Activated CD4-positive, alpha-beta T cell treated with anti-CD3 and anti-CD28 coated beads, Interleukin-2, amount 10 ng/mL, durations not matched to agents 24 days and 14 days (primary cell): ENCODE measurements at regions of chrX and their contacts with region 1.

Region 1: GRCh38 chrX:40735325-40736169 is at the start of gene MED14:
- DNase-seq: peak; percentile 95
- H3K4me3 Mint-ChIP-seq: peak within 1 kb of the TSS; percentile 86
- H3K27ac Mint-ChIP-seq: peak within 1 kb of the TSS; percentile 94
- H3K4me1 Mint-ChIP-seq: peaks cover 21% of the 10 kb centered on the region
- H3K27me3 Mint-ChIP-seq: no peaks in the 10 kb centered on the region
- total RNA-seq, gene MED14: 43.6 and 48.2 TPM in 2 replicates

Region 2: GRCh38 chrX:40524423-40524822 is 211.1 kb before region 1 on chrX:
- intact Hi-C with region 1: no loop called
- DNase-seq: no peak
- H3K4me3 Mint-ChIP-seq: no peak overlapping the region
- H3K27ac Mint-ChIP-seq: no peak overlapping the region
- H3K4me1 Mint-ChIP-seq: no peaks in the 10 kb centered on the region
- H3K27me3 Mint-ChIP-seq: peaks cover 2% of the 10 kb centered on the region

Region 3: GRCh38 chrX:40580537-40581335 is 154.8 kb before region 1 on chrX and contains the start of gene ATP6AP2:
- intact Hi-C with region 1: loop called (anchors 5 kb)
- DNase-seq: peak; percentile 97
- H3K4me3 Mint-ChIP-seq: peak within 1 kb of the TSS; percentile 91
- H3K27ac Mint-ChIP-seq: peak within 1 kb of the TSS; percentile 95
- H3K4me1 Mint-ChIP-seq: peaks cover 19% of the 10 kb centered on the region
- H3K27me3 Mint-ChIP-seq: no peaks in the 10 kb centered on the region
- total RNA-seq, gene ATP6AP2: 66.5 and 68.7 TPM in 2 replicates

Region 4: DNA sequence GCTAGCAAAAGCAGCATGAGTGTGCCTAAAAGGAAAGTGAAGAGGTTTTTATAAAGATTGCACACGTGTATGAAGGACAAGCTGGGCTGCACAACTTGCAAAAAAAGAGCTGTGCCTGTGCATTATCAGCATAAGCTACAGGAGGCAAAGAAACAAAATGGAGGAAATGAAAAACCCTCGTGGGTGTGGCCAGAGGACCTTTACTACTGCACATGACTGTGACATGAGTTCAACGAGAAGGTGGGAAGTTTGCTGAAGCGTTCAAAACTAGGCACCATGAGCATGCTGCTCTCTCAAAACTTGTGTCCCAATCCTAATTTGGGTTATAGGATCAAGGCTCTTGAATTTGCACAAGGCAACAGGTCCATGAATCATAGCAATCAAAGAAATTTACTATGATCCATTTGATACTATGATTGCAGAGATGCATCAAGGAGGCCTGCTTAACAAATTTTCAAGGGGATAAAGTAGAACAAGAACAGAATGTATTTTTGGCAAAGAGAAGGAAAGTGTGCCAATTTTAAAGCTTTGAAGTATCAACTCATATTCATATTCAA is 50.1 kb before region 1 on chrX:
- intact Hi-C with region 1: loop called (anchors 10 kb)
- DNase-seq: no peak
- H3K4me3 Mint-ChIP-seq: no peak overlapping the region
- H3K27ac Mint-ChIP-seq: no peak overlapping the region
- H3K4me1 Mint-ChIP-seq: peaks cover 6% of the 10 kb centered on the region
- H3K27me3 Mint-ChIP-seq: no peaks in the 10 kb centered on the region

Region 5: DNA sequence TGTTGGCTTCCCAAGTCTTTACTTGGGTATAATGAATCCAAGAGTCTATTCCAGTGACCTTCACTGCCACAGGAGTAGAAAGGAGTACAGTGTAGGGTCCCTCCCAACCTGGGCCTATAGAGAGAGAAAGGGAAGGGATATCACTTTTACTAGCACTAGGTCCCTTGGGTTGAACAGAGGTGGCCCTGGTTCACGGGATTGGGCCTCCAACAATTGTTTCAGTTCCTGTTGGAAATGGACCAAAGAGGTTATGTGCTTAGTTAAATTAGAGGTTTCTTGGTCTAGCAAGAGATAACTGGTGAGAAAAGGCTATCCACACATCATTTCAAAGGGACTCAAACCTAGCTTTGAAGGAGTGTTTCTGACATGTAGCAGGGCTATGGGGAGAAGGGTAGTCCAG is 56.9 kb after region 1 on chrX:
- intact Hi-C with region 1: loop called (anchors 5 kb)
- DNase-seq: no peak
- H3K4me3 Mint-ChIP-seq: no peak overlapping the region
- H3K27ac Mint-ChIP-seq: no peak overlapping the region
- H3K4me1 Mint-ChIP-seq: peaks cover 2% of the 10 kb centered on the region
- H3K27me3 Mint-ChIP-seq: peaks cover 4% of the 10 kb centered on the region

Region 6: GRCh38 chrX:40933132-40933705 is 197.7 kb after region 1 on chrX:
- intact Hi-C with region 1: loop called (anchors 5 kb)
- DNase-seq: peak; percentile 72
- H3K4me3 Mint-ChIP-seq: peak overlapping the region; percentile 79
- H3K27ac Mint-ChIP-seq: peak overlapping the region; percentile 95
- H3K4me1 Mint-ChIP-seq: peaks cover 18% of the 10 kb centered on the region
- H3K27me3 Mint-ChIP-seq: no peaks in the 10 kb centered on the region

Region 7: DNA sequence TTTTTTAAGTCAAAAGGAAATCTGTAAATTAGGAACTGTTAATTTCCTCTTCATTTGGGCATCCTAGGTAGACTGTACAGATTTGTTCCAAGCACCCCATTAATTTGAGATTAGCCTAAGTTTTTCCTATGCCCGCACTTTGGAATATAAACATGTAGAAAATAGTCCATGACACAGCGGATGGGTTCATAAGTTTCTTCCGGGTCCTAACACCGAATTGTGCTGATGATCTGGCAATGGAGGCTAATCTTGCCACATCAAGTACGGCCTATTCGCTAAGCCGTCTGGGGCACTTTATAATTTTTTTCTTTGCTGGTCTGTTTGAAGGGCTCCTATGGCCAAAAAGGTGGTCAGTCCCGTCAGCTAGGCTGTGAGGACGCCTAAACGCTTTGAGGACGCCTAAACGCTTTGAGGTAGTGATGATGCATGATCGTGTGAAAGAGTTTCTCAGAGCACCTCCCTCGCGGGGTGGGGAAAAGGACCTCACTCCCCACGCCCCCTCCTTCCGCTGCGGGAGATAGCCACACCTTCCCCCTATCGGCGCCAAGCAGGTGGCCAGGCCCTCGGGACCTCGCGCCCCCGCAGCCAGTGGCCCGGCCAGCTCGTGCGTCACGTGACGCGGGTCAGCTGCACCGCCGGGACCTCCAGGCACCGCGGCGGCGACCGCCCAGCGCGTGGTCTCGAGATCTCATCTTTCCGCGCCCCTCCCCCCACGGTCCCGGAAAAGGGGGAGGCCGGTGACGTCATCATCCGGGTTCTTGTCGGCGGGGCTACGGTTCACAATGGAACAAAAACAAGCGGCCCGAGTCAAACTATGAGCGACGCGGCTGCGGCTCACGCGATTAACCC is 348.7 kb after region 1 on chrX:
- intact Hi-C with region 1: loop called (anchors 1 kb)
- DNase-seq: peak; percentile 97
- H3K4me3 Mint-ChIP-seq: peak overlapping the region; percentile 92
- H3K27ac Mint-ChIP-seq: peak overlapping the region; percentile 99
- H3K4me1 Mint-ChIP-seq: peaks cover 10% of the 10 kb centered on the region
- H3K27me3 Mint-ChIP-seq: peaks cover 2% of the 10 kb centered on the region

Region 8: DNA sequence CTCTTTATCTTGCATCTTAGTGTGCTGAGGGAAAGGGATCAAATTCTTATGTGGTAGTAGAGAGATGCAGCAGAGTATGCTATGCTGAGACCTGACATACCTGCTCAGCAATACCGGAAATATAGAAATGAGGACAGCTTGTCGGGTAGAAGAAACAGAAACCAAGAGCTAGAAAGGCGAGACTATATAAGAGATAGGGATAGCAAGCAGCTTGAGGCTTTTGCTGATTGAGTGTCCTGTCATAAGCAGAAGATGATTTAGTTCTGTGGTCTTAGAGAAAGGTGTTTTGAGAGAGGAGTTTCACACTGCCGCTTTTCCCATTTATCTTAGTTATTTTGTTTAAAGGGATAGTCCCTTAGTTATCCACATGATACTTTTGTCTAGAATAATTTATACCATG is 381.4 kb after region 1 on chrX:
- intact Hi-C with region 1: loop called (anchors 10 kb)
- DNase-seq: peak; percentile 71
- H3K4me3 Mint-ChIP-seq: peak overlapping the region; percentile 58
- H3K27ac Mint-ChIP-seq: peak overlapping the region; percentile 78
- H3K4me1 Mint-ChIP-seq: peaks cover 48% of the 10 kb centered on the region
- H3K27me3 Mint-ChIP-seq: no peaks in the 10 kb centered on the region